Activated CD8-positive, alpha-beta memory T cell treated with anti-CD3 and anti-CD28 coated beads, Interleukin-2, amount 10 ng/mL, durations not matched to agents 7 days and 5 days (primary cell): ENCODE measurements at regions of chr12 and their contacts with region 1.

Region 1: DNA sequence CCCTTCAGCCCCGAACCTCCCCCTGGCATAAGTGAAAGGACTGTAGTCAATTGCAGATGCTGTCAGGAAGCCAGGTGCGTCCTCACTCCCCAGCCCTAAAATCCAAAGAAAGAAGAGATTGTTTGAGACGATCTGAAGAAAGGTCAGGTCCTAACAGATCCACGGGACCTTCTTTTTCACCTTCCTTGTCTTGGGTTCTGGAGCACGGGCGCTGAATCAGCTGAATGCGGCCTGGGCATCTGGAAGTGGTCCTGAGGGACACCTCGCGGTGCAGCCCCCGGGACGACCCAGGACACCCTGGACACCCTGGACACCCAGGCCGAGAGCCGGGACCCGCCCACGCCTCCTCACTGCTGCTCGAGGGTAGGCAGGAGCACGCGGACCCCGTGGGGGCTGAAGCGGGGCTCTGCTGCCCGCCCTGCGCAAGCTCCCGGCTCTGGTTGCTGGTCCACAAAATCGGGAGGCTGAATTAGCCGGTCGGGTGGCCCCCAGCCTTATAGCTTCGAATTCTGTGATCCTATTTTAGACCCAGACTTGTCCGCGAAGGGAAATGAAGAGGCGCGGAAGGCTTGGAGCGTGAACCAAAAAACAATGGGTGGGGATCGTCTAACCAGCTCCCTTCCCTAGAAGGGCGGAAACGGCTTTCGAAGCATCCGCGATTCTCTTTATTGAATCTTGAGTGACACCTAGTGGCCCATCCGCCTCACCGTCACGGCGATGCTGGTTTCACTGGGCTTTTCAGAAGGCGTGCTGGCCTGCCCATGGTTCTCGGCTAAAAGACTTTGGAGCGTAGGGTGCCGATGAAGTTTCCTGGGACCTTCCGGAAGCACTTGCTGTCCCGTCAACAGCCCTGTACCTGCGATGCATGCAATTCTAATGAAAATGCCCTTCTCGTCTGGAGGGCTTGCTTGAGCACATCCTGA is 46.4 kb upstream of the PLXNC1 start:
- DNase-seq: peak; percentile 91
- ATAC-seq: peak; percentile 84
- H3K4me3 Mint-ChIP-seq: peak overlapping the region; percentile 80
- H3K27ac Mint-ChIP-seq: peak overlapping the region; percentile 75
- H3K4me1 Mint-ChIP-seq: peaks cover 29% of the 10 kb centered on the region
- H3K27me3 Mint-ChIP-seq: peaks cover 46% of the 10 kb centered on the region

Region 2: GRCh38 chr12:93502802-93503623 is 599.0 kb before region 1 on chr12:
- CTCF ChIA-PET with region 1: interaction called, 167 read pairs
- DNase-seq: peak; percentile 71
- ATAC-seq: peak; percentile 42
- H3K4me3 Mint-ChIP-seq: no peak overlapping the region
- H3K27ac Mint-ChIP-seq: no peak overlapping the region
- H3K4me1 Mint-ChIP-seq: peaks cover 17% of the 10 kb centered on the region
- H3K27me3 Mint-ChIP-seq: no peaks in the 10 kb centered on the region

Region 3: GRCh38 chr12:93569656-93570551 is 532.1 kb before region 1 on chr12:
- CTCF ChIA-PET with region 1: interaction called, 105 read pairs
- DNase-seq: peak; percentile 86
- ATAC-seq: peak; percentile 60
- H3K4me3 Mint-ChIP-seq: peak overlapping the region; percentile 85
- H3K27ac Mint-ChIP-seq: peak overlapping the region; percentile 81
- H3K4me1 Mint-ChIP-seq: peaks cover 27% of the 10 kb centered on the region
- H3K27me3 Mint-ChIP-seq: peaks cover 18% of the 10 kb centered on the region

Region 4: DNA sequence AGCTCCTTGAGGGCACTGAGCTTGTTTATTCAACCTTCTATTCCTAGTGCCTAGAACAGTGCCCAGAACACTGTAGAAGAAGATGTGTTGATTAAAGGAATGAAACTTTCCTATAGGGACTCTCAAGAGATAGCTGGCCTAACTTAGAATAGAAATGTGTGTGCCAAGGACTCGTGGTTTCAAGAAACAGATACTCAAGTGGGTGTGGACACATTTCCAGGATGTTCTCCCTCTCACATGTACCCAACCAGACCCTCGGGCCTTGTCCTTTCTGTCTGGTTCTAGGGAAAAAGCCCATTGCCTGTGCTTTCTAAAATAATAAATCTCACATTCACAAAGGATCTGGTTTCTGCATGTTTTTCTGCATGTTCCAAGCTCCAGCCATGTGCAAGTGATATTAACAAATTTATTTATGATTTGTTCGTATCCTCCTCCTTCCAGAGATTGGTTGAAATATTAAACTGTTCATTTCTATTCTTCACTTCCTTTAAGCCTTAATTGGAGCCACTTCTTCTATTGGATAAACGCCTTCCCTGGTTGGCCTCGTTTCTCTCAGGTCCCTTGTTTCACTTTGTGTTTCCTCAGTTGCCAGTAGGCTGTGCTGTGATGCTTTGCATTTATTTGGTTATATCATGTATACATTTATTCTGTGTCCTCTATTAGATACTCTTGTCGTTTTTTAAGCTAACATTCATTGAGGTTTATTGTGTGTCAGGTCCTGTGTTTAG is 335.0 kb before region 1 on chr12:
- CTCF ChIA-PET with region 1: interaction called, 162 read pairs
- DNase-seq: peak; percentile 55
- ATAC-seq: peak; percentile 81
- H3K4me3 Mint-ChIP-seq: no peak overlapping the region
- H3K27ac Mint-ChIP-seq: peak overlapping the region; percentile 50
- H3K4me1 Mint-ChIP-seq: peaks cover 28% of the 10 kb centered on the region
- H3K27me3 Mint-ChIP-seq: no peaks in the 10 kb centered on the region

Region 5: DNA sequence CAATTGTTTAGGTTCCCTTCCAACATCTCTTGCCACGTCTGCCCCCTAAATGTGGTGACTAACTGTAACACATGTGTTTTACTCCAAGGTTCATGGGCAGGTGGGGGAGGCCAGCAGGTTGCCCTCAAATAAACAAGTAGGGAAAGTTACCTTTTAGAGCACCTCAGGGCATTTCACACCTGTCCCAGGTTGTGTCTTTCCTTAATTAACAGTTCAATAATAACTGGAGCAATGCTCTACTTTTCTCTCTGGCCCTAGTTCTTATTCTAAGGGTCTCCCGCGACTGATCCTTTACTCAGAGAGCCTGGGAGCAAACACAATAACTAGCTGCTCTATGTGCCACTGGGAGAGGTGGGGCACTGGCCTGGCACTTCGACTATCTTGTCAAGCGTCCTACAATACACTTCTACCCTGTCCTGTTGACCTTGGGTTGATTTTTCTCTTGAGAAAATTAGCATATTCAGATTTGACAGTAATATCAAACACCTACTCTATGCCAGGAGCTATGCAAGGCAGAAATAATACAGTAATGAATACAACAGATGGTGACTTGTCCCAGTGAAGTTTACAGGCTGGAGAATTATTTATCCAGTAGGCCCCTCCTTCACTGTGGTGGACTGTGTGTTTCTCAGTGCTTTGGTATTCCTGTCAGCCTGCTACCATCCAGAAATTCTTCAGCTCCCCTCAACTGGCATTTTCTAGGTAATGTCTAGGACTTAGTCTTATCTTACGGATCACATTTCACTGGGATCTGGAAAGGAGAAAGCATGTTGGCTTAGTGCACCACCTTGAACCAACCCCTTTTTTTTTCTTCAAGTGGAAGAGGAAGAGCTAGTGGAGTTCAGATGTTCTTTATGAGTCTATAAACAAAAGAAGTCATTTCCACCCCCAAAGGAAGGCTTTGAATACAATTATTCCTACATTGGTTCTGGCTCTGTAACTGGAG is 222.2 kb before region 1 on chr12:
- CTCF ChIA-PET with region 1: interaction called, 10 read pairs
- DNase-seq: no peak
- ATAC-seq: no peak
- H3K4me3 Mint-ChIP-seq: no peak overlapping the region
- H3K27ac Mint-ChIP-seq: no peak overlapping the region
- H3K4me1 Mint-ChIP-seq: peaks cover 17% of the 10 kb centered on the region
- H3K27me3 Mint-ChIP-seq: peaks cover 5% of the 10 kb centered on the region

Region 6: GRCh38 chr12:94089891-94090290 is 12.1 kb before region 1 on chr12:
- CTCF ChIA-PET with region 1: interaction called, 20 read pairs
- DNase-seq: no peak
- ATAC-seq: no peak
- H3K4me3 Mint-ChIP-seq: no peak overlapping the region
- H3K27ac Mint-ChIP-seq: no peak overlapping the region
- H3K4me1 Mint-ChIP-seq: no peaks in the 10 kb centered on the region
- H3K27me3 Mint-ChIP-seq: peaks cover 5% of the 10 kb centered on the region